Activated CD8-positive, alpha-beta T cell treated with anti-CD3 and anti-CD28 coated beads, Interleukin-2, amount 10 ng/mL, durations not matched to agents 7 days and 5 days (primary cell): ENCODE measurements at regions of chr7 and their contacts with region 1.

Region 1: DNA sequence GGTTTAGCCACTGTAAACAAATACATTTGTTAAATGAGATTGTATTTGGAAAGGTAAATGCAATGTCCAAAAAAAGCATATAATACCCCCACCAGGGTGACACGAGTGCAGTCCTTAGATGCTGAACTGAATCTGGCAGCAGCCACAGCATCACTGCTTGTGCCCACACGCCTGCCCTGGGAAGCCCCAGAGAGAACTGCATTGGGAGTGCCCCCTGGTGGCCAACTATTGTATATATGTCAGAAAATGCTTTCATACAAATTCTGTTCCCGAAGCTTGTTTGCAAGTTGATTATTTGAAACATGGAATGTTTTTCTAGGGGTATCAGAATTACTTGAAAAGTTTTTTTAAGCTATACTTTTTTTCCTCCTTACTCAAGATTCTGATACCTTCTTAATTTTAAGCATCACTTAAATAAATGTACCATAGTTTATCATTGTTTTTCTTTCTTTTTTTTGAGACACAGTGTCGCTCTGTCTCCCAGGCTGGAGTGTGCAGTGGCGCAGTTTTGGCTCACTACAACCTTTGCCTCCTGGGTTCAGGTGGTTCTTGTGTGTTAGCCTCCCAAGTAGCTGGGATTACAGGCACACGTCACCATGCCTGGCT is 50.1 kb downstream of the LANCL2 start:
- DNase-seq: peak; percentile 87
- ATAC-seq: peak; percentile 92
- H3K4me3 Mint-ChIP-seq: no peak overlapping the region
- H3K27ac Mint-ChIP-seq: no peak overlapping the region
- H3K4me1 Mint-ChIP-seq: peaks cover 2% of the 10 kb centered on the region
- H3K27me3 Mint-ChIP-seq: no peaks in the 10 kb centered on the region

Region 2: DNA sequence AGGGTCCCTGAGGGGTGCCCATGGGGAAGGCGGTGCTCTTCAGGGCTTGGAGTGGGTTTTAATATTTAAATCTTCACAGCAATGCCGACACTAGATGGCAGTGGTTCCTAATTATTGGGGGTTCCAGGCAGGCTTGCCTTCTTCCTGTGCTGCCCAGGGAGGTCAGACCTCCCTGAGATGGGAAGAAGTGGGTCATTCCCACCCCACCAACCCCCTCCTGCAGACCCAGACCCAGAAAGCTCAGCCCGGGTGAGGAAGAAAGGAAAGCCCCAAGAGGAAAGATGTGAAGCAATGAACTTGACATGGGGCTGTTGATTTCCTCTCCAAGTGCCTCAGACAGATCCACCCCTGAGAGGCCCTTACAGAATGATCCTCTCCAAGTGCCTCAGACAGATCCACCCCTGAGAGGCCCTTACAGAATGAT is 135.2 kb before region 1 on chr7:
- CTCF ChIA-PET with region 1: interaction called, 73 read pairs
- POLR2A ChIA-PET with region 1: no interaction called
- DNase-seq: peak; percentile 72
- ATAC-seq: peak; percentile 88
- H3K4me3 Mint-ChIP-seq: no peak overlapping the region
- H3K27ac Mint-ChIP-seq: no peak overlapping the region
- H3K4me1 Mint-ChIP-seq: peaks cover 2% of the 10 kb centered on the region
- H3K27me3 Mint-ChIP-seq: peaks cover 3% of the 10 kb centered on the region